Posterior vena cava (tissue), 2 donors: ENCODE measurements at regions of chr17 and their contacts with region 1.

Region 1: GRCh38 chr17:79393358-79394202 is 217.3 kb downstream of the RBFOX3 start:
- DNase-seq: peak; percentile 94

Region 2: DNA sequence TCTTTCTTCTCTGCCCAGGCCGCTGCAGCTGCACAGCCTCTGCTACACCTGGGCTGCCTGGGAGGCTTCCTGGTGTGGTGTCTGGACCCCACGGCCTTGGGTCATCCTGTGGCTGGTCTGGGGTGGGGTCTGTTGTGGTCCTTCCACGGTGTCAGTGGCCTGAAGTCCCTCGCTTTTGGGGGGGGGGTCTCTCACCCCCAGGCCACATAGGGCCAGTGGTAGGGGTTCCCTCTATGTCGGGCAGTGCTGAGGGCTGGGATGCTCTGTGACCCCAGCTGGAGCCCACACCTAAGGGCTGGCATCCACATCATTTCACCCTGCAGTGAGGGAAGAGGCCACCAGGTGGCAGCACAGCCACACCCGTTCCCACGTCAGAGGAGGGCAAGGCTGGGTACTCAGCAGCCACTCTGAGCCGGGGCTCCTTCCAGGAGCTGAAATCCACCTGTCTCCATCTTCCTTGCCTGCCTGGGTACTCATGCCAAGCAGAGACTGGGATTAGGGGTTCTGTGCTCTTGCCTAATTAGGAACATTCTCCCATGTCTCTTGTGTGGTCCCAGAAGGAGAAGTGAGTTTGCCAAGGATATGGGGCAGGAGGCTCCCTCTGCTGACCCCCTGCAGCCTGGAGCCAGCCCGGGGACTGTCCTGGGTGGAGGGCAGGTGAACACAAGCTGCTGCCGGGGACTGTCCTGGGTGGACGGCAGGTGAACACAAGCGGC is 306.0 kb before region 1 on chr17:
- intact Hi-C with region 1: loop called (anchors 2 to 5 kb)
- DNase-seq: peak; percentile 91

Region 3: GRCh38 chr17:79188048-79188447 is 205.5 kb before region 1 on chr17:
- intact Hi-C with region 1: loop called in 1 of 2 experiments (anchors 5 kb)
- DNase-seq: no peak

Region 4: DNA sequence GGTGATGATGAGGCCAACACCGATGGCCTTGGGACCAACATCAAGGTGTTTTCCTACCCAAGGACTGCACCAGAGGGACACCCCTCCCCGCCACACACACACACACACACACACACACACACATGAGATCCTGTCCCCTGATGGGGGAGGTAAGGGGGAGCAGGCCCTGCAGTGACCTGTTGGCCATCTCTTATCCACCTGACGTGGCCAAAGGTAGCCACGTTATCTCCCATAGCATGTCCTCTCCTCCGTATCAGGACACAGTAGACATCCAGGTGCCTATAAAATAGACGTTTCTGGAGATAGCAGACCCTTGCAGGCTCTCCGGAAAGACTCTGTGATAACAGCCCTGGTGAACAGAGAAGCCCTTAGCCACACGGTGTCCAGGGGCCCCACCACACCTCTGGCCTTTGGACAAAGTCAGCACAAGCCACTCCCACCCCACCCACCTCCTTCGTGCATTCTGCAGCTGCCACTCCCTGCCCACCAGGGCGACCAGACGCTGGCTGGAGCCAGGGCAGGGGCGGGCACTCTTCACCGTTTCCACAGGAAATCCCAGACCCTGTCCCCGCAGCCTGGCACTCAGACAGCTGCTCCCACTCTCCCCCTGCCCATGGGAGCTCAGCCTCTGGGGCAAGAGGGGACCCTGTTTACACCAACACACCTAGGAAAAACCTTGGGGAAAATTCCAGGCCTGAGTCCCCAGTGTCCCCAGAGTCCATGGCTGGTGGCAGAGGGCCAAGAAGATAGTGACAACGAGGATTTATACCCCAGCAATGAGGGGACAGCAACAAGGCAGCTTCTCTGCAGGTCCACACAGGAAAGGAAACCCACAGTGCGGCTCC is 321.7 kb after region 1 on chr17:
- intact Hi-C with region 1: no loop called
- DNase-seq: no peak

Region 5: DNA sequence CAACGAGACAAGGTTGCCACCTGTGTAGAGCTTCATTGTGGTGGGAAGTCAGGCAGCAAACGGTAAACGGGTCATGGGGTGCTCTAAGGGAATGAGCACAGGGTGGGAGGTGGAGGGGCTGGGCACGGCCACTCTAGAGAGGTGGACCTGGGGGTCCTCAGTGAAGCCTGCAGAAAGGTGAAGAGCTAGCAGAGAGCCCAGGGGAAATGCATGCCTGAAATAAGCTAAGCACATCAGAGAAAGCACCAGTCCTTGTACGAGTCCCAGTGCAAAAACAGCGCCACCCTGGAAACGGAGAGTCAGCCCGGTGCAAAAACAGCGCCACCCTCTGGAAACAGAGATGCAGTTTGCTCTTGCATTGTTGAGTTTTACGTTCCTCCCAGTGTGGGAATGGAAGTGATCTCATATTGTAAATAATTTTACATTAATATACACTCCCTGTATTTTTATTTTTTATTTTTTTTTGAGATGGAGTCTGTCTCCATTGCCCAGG is 577.0 kb after region 1 on chr17:
- intact Hi-C with region 1: loop called in 1 of 2 experiments (anchors 10 kb)
- DNase-seq: peak; percentile 46